Activated CD4-positive, alpha-beta T cell treated with anti-CD3 and anti-CD28 coated beads for 36 hours (primary cell): ENCODE measurements at regions of chrX and their contacts with region 1.

Region 1: GRCh38 chrX:46376246-46376885 is 168.9 kb downstream of the ZNF674 start:
- DNase-seq: peak; percentile 52
- ATAC-seq: peak; percentile 97
- H3K4me3 Mint-ChIP-seq: no peak overlapping the region
- H3K27ac Mint-ChIP-seq: no peak overlapping the region
- H3K4me1 Mint-ChIP-seq: peaks cover 18% of the 10 kb centered on the region
- H3K27me3 Mint-ChIP-seq: no peaks in the 10 kb centered on the region

Region 2: DNA sequence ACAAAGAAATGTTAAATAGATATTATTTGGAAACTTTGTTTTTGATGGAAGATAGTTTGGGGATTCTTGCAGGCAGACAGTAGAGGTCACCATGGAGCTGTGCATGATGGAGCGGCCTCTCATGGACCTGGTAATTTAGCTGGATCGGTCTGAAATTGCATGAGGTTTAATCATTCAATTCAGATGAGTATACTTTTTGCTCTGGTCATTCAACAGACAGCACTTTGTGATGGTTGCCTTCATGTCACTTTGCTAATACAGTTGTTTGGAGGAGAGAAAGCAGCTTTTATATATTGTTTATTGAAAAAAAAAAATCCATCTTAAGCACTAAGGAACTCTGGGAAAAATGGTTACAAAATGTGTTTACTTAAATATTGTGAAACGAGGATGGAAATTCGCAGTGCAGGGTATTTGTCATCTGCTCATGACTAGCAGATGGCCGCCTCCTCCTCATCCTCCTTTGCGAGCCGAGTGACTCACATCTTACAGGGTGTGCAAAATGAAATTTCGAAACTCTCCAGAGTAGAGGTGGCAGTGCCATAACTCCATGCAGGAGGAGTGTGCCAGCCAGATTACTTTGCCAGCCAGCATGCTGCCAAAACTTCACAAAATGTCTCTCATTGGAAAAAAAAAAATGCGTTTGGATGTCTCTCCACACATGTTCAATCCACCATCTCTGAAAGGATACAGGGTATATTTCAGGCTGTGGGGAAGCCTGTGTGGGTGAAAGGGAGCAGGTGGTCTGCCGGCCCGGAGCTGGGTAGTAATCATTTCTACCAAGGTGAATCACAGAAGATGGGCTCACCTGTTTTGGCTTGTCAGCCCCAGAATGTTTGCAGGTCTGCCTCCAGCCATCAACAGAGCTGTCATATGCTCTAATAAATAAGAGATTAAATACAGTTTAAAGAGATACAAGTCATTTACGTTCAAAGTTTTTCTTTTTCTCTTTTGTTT is 860.8 kb before region 1 on chrX:
- CTCF ChIA-PET with region 1: no interaction called
- POLR2A ChIA-PET with region 1: no interaction called
- intact Hi-C with region 1: loop called in 1 of 2 experiments (anchors 5 kb)
- DNase-seq: peak; percentile 59
- ATAC-seq: peak; percentile 92
- H3K4me3 Mint-ChIP-seq: peak overlapping the region; percentile 43
- H3K27ac Mint-ChIP-seq: peak overlapping the region; percentile 39
- H3K4me1 Mint-ChIP-seq: peaks cover 23% of the 10 kb centered on the region
- H3K27me3 Mint-ChIP-seq: no peaks in the 10 kb centered on the region

Region 3: GRCh38 chrX:45801554-45801953 is 574.8 kb before region 1 on chrX:
- CTCF ChIA-PET with region 1: no interaction called
- POLR2A ChIA-PET with region 1: no interaction called
- intact Hi-C with region 1: loop called in 1 of 2 experiments (anchors 10 kb)
- DNase-seq: no peak
- ATAC-seq: peak; percentile 55
- H3K4me3 Mint-ChIP-seq: peak overlapping the region; percentile 63
- H3K27ac Mint-ChIP-seq: peak overlapping the region; percentile 92
- H3K4me1 Mint-ChIP-seq: peaks cover 71% of the 10 kb centered on the region
- H3K27me3 Mint-ChIP-seq: no peaks in the 10 kb centered on the region

Region 4: DNA sequence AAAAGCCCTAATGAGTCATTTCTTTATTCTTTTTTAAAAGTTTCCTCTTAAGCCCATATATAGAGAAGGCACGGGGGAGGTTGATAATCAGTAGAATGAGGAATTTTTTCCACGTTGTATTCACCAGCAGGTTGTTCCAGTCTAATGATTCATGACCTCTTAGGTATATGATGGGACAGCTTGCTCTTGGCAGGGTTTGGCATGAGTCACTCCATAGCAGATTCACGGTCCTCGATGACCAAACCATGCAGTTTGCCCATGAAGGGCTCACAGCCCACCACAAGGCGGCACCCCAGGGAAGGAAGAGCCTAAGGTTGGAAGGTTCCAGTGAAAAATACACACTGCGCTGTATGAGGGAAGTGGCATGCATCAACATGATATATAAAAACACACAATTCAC is 551.9 kb before region 1 on chrX:
- CTCF ChIA-PET with region 1: interaction called, 5 read pairs
- POLR2A ChIA-PET with region 1: no interaction called
- intact Hi-C with region 1: loop called in 1 of 2 experiments (anchors 1 kb)
- DNase-seq: peak; percentile 78
- ATAC-seq: peak; percentile 96
- H3K4me3 Mint-ChIP-seq: no peak overlapping the region
- H3K27ac Mint-ChIP-seq: peak overlapping the region; percentile 93
- H3K4me1 Mint-ChIP-seq: peaks cover 57% of the 10 kb centered on the region
- H3K27me3 Mint-ChIP-seq: no peaks in the 10 kb centered on the region